Activated CD4-positive, alpha-beta T cell treated with anti-CD3 and anti-CD28 coated beads, Interleukin-2, amount 10 ng/mL, durations not matched to agents 24 days and 14 days (primary cell): ENCODE measurements at regions of chr18 and their contacts with region 1.

Region 1: GRCh38 chr18:23503038-23503962 is at the start of gene RMC1:
- DNase-seq: peak; percentile 99
- H3K4me3 Mint-ChIP-seq: peak within 1 kb of the TSS; percentile 87
- H3K27ac Mint-ChIP-seq: peak within 1 kb of the TSS; percentile 91
- H3K4me1 Mint-ChIP-seq: peaks cover 51% of the 10 kb centered on the region
- H3K27me3 Mint-ChIP-seq: no peaks in the 10 kb centered on the region
- total RNA-seq, gene RMC1: 51.0 and 52.8 TPM in 2 replicates

Region 2: DNA sequence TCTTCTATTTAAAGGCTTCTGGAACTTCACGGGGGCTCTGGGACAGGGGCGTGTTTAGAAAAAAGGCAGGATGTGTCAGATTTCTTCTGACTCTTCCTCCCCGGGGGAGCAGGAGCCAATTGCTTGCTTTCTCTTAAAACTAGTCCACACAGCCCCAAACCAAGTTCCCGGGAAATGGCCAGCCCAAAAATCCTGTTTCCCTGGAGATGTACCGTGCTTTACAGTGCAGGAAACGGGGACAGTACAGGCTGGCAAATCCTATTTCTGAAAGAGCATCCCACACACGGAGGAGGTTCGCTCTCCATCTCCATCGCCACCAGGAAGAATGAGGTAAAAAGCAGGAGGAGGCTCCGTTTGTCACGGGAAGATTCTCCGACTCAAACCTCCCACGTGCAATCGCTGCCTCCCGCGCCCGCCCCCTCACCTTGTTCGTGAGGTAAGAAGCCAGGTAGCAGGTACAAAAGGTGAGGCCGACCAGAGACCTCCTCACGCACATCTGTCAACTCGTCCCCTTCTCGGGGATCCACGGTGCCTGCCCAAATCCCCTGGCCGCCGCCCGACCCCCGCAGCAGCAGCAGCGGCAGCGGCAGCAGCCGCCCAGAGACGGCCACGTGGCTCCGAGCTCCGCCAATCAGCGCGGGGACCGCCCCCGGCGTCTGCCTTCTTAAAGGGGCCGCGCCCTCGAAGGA is 65.8 kb before region 1 on chr18:
- intact Hi-C with region 1: loop called (anchors 2 kb)
- DNase-seq: peak; percentile 94
- H3K4me3 Mint-ChIP-seq: peak overlapping the region; percentile 89
- H3K27ac Mint-ChIP-seq: peak overlapping the region; percentile 89
- H3K4me1 Mint-ChIP-seq: peaks cover 14% of the 10 kb centered on the region
- H3K27me3 Mint-ChIP-seq: peaks cover 2% of the 10 kb centered on the region

Region 3: GRCh38 chr18:23468753-23469459 is 34.4 kb before region 1 on chr18:
- intact Hi-C with region 1: no loop called
- DNase-seq: no peak
- H3K4me3 Mint-ChIP-seq: no peak overlapping the region
- H3K27ac Mint-ChIP-seq: no peak overlapping the region
- H3K4me1 Mint-ChIP-seq: peaks cover 4% of the 10 kb centered on the region
- H3K27me3 Mint-ChIP-seq: no peaks in the 10 kb centered on the region

Region 4: DNA sequence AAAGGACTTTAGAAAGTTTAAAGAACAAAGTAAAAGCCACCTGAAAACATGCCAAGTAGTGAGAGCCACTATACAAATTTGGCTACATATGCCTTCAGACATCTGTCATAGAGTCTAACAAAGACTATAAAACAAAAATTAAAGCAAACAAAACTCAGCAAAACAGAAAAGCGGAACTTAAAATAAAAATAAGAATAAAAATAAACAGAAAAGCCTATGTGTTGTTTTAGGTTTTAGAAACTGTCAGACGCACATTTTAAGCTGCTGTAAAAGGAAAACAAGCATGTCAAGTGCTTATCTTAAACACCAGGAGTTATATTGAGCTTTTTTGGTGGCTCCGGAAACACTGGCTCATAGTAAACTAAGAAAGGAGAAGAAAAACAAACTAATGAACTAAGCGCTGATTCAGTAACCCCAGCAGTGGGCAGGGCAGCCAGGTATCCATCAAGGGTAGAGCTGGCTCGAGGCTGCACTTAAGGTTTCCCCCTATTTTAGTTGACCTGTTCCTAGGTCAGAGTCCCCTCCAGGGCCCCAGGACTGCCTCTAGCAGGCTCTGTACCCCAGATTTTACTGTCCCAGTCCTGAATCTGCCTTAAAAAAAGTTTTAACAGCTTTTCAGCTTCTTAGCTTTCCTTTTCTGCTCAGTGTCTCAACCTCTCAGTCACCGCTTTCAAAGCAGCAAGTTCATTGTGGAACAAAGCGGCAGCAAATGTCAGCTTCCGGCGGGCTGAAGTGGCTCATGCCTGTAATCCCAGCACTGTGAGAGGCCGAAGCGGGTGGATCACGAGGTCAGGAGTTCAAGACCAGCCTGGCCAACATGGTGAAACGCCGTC is 15.3 kb before region 1 on chr18:
- intact Hi-C with region 1: loop called (anchors 1 kb)
- DNase-seq: peak; percentile 85
- H3K4me3 Mint-ChIP-seq: peak overlapping the region; percentile 57
- H3K27ac Mint-ChIP-seq: peak overlapping the region; percentile 81
- H3K4me1 Mint-ChIP-seq: peaks cover 17% of the 10 kb centered on the region
- H3K27me3 Mint-ChIP-seq: no peaks in the 10 kb centered on the region

Region 5: DNA sequence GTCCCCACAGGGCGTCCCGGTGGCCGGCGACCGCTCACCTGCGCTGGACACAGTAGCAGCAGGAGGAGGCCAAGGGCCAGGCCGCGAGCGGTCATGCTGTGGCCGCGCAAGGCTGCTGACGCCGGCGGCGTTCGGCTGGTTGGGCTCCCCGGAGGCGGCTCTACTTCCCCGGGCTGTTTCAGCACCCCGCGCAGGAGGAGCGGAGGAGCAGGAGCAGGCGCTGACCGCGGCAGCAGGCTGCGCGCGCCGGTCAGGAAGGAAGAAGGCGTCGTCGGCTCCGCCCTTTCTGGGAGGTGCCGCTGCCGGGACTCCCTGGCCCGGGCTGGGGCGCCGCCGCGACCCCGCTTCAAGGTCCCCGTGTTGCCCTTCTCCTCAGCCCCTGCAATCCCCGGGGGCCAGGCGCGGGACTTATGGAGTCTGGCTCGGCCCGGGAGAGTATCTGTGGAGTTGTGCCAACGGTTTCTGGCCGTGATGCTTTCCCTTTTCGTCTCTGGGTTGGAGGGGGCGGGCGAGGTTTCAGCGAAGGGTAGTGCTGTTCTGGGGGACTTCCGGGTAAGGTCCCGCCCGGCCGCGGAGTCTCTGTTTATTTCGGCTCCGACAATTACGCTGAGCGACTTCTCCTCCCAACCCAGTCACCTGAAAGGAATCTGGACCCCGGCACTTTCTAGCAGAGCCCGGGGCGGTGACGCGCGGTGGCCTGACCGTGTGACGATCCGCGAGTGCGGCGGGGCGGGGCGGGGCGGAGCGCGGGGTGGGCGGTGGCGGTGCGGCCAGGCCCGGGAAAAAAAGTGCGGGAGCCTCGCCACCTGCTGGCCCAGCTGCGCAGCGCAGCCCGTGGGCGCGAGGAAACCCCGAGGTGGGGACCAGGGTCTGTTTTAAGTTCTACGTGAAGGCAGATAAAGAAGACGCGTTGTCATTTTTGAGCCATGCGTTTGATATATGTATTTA is 83.2 kb after region 1 on chr18 and contains the start of gene NPC1:
- intact Hi-C with region 1: loop called (anchors 1 kb)
- DNase-seq: peak; percentile 98
- H3K4me3 Mint-ChIP-seq: peak within 1 kb of the TSS; percentile 94
- H3K27ac Mint-ChIP-seq: peak within 1 kb of the TSS; percentile 96
- H3K4me1 Mint-ChIP-seq: peaks cover 37% of the 10 kb centered on the region
- H3K27me3 Mint-ChIP-seq: peaks cover 3% of the 10 kb centered on the region
- total RNA-seq, gene NPC1: 26.3 and 29.9 TPM in 2 replicates

Region 6: GRCh38 chr18:23918401-23919032 is 415.2 kb after region 1 on chr18:
- intact Hi-C with region 1: loop called (anchors 5 kb)
- DNase-seq: peak; percentile 93
- H3K4me3 Mint-ChIP-seq: no peak overlapping the region
- H3K27ac Mint-ChIP-seq: no peak overlapping the region
- H3K4me1 Mint-ChIP-seq: peaks cover 26% of the 10 kb centered on the region
- H3K27me3 Mint-ChIP-seq: peaks cover 21% of the 10 kb centered on the region